CD8-positive, alpha-beta T cell (primary cell): ENCODE measurements at regions of chr11 and their contacts with region 1.

Region 1: DNA sequence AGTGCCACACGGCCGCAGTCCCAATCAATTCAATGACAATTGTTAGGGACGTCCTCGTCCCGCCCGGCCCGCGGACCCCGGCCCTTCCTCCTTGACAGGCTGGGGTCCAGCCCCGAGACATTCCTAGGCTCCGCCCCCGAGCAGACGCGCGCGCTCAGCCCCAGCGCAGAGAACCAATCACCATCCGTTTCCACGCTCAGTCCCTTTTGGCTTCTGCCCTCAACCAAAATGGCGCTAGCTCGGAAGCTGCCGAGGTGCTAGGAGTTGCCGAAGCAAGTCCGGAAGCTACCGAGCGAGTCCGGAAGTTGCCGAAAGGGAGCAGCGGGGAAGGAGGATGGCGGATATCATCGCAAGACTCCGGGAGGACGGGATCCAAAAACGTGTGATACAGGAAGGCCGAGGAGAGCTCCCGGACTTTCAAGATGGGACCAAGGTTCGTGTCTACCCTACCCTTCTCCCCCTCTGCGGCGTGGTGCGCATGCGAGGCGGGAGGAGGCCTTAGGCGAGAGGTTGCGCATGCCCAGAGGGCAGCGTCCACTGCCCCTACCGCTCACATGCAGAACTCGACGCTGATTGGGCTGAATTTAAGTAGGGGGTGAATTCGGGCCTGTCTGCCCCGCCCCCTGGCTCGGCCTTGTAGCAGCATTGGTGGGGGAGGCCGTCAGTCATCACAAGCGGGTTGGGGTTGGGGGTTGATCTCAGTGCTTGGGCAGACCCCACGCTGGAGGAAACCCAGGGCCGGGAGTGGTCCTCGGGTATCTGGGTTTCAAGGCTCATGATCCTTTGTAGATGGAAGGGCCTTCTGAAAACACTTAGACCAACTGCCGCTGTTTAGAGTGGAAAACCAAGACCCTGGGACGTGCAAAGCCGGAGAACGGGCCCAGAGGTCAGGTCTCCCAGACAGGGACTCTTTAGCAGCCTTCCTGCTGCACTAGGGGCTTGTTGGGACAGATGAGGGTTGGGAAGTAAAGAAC is at the start of gene AIP:
- DNase-seq: peak; percentile 94 to 99 (median 97)
- ATAC-seq: peak; percentile 76
- H3K4me3 ChIP-seq: peak within 1 kb of the TSS; percentile 62 to 73
- H3K4me3 Mint-ChIP-seq: peak within 1 kb of the TSS; percentile 93
- H3K27ac ChIP-seq: peak within 1 kb of the TSS; percentile 81 to 89
- H3K27ac Mint-ChIP-seq: peak within 1 kb of the TSS; percentile 99
- H3K4me1 ChIP-seq: peaks cover 48% of the 10 kb centered on the region
- H3K4me1 Mint-ChIP-seq: peaks cover 54% of the 10 kb centered on the region
- H3K27me3 ChIP-seq: no peaks in the 10 kb centered on the region
- H3K27me3 Mint-ChIP-seq: no peaks in the 10 kb centered on the region
- CTCF ChIP-seq: no peak
- total RNA-seq, gene AIP: 109 to 111 TPM

Region 2: DNA sequence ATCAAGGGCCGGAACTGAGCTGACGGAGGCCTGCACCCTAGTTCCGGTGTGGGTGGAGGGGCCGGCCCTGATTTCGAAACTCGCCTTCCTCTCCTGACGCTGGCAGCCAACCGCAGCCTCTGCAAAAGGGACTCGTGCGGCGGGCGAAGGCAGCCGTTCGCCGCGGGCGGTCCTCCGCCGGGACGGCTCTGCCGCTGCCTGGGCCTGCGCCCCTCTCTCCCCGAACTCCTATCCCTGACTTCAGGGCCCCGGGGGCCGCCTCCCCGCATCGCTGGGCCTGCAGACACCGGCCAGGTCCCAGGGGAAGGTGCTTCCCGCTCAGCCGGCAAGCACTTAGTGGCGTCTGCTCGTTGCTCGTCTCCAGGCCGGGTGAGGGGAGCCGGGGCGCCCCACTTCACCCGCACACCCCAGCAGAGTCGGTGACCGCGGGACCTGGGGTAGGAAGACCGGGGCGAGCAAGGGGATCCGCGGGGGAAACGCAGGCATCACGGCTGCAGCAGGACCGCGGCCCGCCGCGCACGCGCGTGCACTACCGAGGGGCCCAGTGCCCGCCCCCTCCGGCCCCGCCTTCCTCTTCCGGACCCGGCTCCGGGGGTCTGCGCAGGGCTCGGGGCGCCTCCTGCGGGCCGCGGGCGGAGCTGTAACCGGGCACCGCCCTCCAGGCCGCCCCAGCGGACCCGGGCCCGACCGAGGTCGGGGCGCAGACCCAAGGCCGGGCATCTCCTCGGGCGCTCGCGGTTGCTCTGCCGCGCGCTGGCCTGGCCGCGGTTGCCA is 194.5 kb before region 1 on chr11:
- CTCF ChIA-PET with region 1: no interaction called
- POLR2A ChIA-PET with region 1: no interaction called
- intact Hi-C with region 1: loop called in 1 of 2 experiments (anchors 5 kb)
- DNase-seq: peak; percentile 78 to 97 (median 92)
- ATAC-seq: peak; percentile 67
- H3K4me3 ChIP-seq: peak overlapping the region; percentile 90 to 92
- H3K4me3 Mint-ChIP-seq: peak overlapping the region; percentile 80
- H3K27ac ChIP-seq: peak overlapping the region; percentile 79 to 98
- H3K27ac Mint-ChIP-seq: peak overlapping the region; percentile 98
- H3K4me1 ChIP-seq: peaks cover 64% of the 10 kb centered on the region
- H3K4me1 Mint-ChIP-seq: peaks cover 59% of the 10 kb centered on the region
- H3K27me3 ChIP-seq: no peaks in the 10 kb centered on the region
- H3K27me3 Mint-ChIP-seq: no peaks in the 10 kb centered on the region
- CTCF ChIP-seq: peak; percentile 58

Region 3: DNA sequence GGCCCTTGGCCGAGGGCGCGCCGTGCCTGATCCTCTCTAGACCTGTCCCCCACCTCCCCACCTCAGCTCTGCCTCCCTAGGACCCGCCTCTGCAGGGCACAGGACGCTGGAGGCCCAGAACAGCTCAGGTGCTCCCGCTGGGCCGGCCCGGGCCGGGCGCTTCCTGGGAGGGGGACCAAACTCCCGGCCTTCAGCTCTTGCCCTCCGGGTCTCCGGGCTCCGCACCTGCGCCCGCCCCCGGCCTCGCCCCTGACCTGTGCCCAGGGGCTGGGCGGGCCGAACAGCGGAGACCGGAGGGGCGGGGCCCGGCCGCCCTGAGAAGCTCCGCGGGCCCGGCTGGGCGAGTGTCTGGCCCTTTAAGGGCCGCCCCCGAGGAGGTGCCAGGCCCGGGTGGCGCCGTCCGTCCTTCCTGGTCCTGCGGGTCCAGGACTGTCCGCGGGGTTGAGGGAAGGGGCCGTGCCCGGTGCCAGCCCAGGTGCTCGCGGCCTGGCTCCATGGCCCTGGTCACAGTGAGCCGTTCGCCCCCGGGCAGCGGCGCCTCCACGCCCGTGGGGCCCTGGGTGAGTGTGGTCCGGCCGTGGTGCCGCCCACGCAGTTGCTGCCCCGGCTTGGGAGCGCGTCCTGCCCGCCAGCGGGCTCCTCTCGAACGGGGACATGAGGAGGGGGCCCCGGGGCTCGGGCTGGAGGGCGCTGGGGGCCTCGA is 179.8 kb before region 1 on chr11 and contains the start of gene SSH3:
- CTCF ChIA-PET with region 1: no interaction called
- POLR2A ChIA-PET with region 1: no interaction called
- intact Hi-C with region 1: no loop called
- DNase-seq: peak in 8 of 9 experiments; percentile 19 to 72 (median 48)
- ATAC-seq: peak; percentile 72
- H3K4me3 ChIP-seq: peak within 1 kb of the TSS; percentile 61 to 63
- H3K4me3 Mint-ChIP-seq: peak within 1 kb of the TSS; percentile 72
- H3K27ac ChIP-seq: peak within 1 kb of the TSS; percentile 32 to 37
- H3K27ac Mint-ChIP-seq: peak within 1 kb of the TSS; percentile 72
- H3K4me1 ChIP-seq: peaks cover 20% of the 10 kb centered on the region
- H3K4me1 Mint-ChIP-seq: peaks cover 16% of the 10 kb centered on the region
- H3K27me3 ChIP-seq: no peaks in the 10 kb centered on the region
- H3K27me3 Mint-ChIP-seq: no peaks in the 10 kb centered on the region
- CTCF ChIP-seq: no peak
- total RNA-seq, gene SSH3: 5.9 to 9.9 TPM

Region 4: GRCh38 chr11:67409261-67409666 is 73.8 kb before region 1 on chr11:
- CTCF ChIA-PET with region 1: no interaction called
- POLR2A ChIA-PET with region 1: interaction called, 57 read pairs
- intact Hi-C with region 1: no loop called
- DNase-seq: peak; percentile 54 to 91 (median 82)
- ATAC-seq: peak; percentile 64
- H3K4me3 ChIP-seq: peak overlapping the region; percentile 66 to 99
- H3K4me3 Mint-ChIP-seq: peak overlapping the region; percentile 95
- H3K27ac ChIP-seq: peak overlapping the region; percentile 69 to 71
- H3K27ac Mint-ChIP-seq: peak overlapping the region; percentile 91
- H3K4me1 ChIP-seq: peaks cover 91% of the 10 kb centered on the region
- H3K4me1 Mint-ChIP-seq: peaks cover 87% of the 10 kb centered on the region
- H3K27me3 ChIP-seq: no peaks in the 10 kb centered on the region
- H3K27me3 Mint-ChIP-seq: no peaks in the 10 kb centered on the region
- CTCF ChIP-seq: no peak

Region 5: GRCh38 chr11:67420646-67421420 is 62.3 kb before region 1 on chr11:
- CTCF ChIA-PET with region 1: interaction called, 5 read pairs
- POLR2A ChIA-PET with region 1: interaction called, 24 read pairs
- intact Hi-C with region 1: loop called in 1 of 2 experiments (anchors 2 kb)
- DNase-seq: peak; percentile 97 to 100 (median 99)
- ATAC-seq: peak; percentile 85
- H3K4me3 ChIP-seq: peak overlapping the region; percentile 49 to 50
- H3K4me3 Mint-ChIP-seq: peak overlapping the region; percentile 86
- H3K27ac ChIP-seq: peak overlapping the region; percentile 55 to 68
- H3K27ac Mint-ChIP-seq: peak overlapping the region; percentile 91
- H3K4me1 ChIP-seq: peaks cover 50% of the 10 kb centered on the region
- H3K4me1 Mint-ChIP-seq: peaks cover 47% of the 10 kb centered on the region
- H3K27me3 ChIP-seq: no peaks in the 10 kb centered on the region
- H3K27me3 Mint-ChIP-seq: no peaks in the 10 kb centered on the region
- CTCF ChIP-seq: no peak

Region 6: DNA sequence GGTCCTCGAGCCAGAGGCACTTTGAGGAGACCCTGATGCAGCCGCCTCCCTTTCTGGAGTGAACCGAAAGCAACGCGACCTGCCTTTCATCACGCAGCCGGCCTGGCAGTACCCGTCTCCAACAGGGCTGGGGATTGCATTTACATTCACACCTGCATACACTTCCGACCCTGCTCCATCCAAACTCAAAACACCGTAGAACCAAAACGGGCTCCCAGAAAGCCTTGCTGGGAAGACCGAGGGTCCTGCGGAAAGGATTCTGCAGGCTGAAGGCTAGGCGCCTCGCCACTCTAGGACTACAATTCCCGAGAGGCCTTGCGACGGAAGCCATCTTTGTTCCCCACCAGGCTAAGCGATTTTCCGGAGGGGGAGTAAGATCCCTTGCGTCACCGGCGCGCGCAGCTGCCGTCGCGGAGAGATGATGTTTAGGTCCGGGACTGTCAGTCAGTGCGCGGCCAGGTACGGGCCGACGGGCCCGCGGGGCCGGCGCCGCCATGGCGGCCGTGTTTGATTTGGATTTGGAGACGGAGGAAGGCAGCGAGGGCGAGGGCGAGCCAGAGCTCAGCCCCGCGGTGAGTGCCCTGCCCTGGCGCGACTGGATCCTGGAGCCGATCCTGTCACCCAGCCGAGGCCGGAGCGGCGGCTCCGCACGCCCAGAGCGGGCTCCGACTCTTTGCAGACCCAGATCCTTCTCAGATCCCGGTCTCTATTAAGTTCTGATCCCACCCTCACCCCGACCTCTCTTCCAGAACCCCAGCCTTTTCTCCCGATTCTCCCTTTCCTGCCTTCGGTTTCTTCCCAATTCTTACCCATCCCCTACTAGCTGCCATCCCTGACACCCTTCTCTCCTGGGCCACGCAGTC is 54.8 kb before region 1 on chr11 and contains the start of gene RPS6KB2:
- CTCF ChIA-PET with region 1: no interaction called
- POLR2A ChIA-PET with region 1: interaction called, 6 read pairs
- intact Hi-C with region 1: loop called (anchors 1 to 2 kb)
- DNase-seq: peak; percentile 97 to 100 (median 98)
- ATAC-seq: peak; percentile 89
- H3K4me3 ChIP-seq: peak within 1 kb of the TSS; percentile 67 to 73
- H3K4me3 Mint-ChIP-seq: peak within 1 kb of the TSS; percentile 99
- H3K27ac ChIP-seq: peak within 1 kb of the TSS; percentile 86 to 87
- H3K27ac Mint-ChIP-seq: peak within 1 kb of the TSS; percentile 95
- H3K4me1 ChIP-seq: peaks cover 34% of the 10 kb centered on the region
- H3K4me1 Mint-ChIP-seq: peaks cover 41% of the 10 kb centered on the region
- H3K27me3 ChIP-seq: no peaks in the 10 kb centered on the region
- H3K27me3 Mint-ChIP-seq: no peaks in the 10 kb centered on the region
- CTCF ChIP-seq: no peak
- total RNA-seq, gene RPS6KB2: 71.8 to 76.2 TPM

Region 7: GRCh38 chr11:67468835-67469811 is 14.0 kb before region 1 on chr11 and contains the start of gene TMEM134:
- CTCF ChIA-PET with region 1: interaction called, 8 read pairs
- POLR2A ChIA-PET with region 1: interaction called, 29 read pairs
- intact Hi-C with region 1: loop called (anchors 1 kb)
- DNase-seq: peak; percentile 86 to 97 (median 91)
- ATAC-seq: peak; percentile 81
- H3K4me3 ChIP-seq: peak within 1 kb of the TSS; percentile 80 to 89
- H3K4me3 Mint-ChIP-seq: peak within 1 kb of the TSS; percentile 89
- H3K27ac ChIP-seq: peak within 1 kb of the TSS; percentile 78 to 82
- H3K27ac Mint-ChIP-seq: peak within 1 kb of the TSS; percentile 93
- H3K4me1 ChIP-seq: peaks cover 39% of the 10 kb centered on the region
- H3K4me1 Mint-ChIP-seq: peaks cover 37% of the 10 kb centered on the region
- H3K27me3 ChIP-seq: no peaks in the 10 kb centered on the region
- H3K27me3 Mint-ChIP-seq: no peaks in the 10 kb centered on the region
- CTCF ChIP-seq: peak; percentile 43
- total RNA-seq, gene TMEM134: 41.2 to 48.5 TPM